ENCODE measurements at regions of chr11 and their contacts with region 1.

Region 1: DNA sequence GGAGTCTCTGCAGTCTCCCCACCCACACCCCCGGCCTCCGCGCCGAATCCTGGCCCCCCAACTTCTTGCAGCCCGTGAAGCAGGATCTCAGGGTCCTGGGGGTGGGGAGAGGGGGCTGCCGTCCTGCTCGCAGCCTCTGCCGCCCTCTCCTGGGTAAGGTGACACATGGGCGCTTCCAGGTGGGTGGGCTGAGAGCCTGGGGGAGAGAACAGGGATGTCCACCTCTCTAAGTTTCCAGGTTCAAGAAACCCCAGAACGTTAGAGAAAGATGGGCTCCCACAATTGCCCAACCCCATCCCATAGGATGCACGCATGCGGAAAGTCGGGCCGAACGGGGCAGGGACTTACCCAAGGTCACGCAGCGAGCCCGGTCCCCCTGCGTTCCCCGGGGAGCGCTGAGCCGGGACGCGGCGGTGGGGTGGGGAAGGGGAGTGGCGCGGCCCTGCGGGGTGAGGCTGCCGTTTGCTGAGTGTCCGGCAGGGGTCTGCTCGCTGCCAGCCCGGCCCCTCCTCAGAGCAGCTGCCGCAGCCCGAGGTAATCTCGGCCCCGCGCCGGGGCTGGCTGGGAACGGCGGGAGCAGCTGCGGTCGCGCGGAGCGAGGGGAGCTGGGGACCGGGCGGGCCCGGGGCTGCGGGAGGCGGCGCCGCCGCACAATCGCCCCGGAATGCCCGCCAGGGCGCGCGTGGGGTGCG is 705 bp upstream of the CAPN1 start:
- DNase-seq: peak; percentile 55 to 69
- ATAC-seq: peak; percentile 36 to 70 (median 61)
- H3K4me3 ChIP-seq: peak overlapping the region; percentile 72 to 99 (median 88)
- H3K27ac ChIP-seq: peak overlapping the region; percentile 91 to 99 (median 95)
- H3K4me1 ChIP-seq: peaks cover 6 to 28% (median 21%) of the 10 kb centered on the region in 9 donors
- H3K27me3 ChIP-seq: no peaks in the 10 kb centered on the region
- CTCF ChIP-seq: peak in 7 of 9 donors; percentile 2 to 57 (median 51)

Region 2: DNA sequence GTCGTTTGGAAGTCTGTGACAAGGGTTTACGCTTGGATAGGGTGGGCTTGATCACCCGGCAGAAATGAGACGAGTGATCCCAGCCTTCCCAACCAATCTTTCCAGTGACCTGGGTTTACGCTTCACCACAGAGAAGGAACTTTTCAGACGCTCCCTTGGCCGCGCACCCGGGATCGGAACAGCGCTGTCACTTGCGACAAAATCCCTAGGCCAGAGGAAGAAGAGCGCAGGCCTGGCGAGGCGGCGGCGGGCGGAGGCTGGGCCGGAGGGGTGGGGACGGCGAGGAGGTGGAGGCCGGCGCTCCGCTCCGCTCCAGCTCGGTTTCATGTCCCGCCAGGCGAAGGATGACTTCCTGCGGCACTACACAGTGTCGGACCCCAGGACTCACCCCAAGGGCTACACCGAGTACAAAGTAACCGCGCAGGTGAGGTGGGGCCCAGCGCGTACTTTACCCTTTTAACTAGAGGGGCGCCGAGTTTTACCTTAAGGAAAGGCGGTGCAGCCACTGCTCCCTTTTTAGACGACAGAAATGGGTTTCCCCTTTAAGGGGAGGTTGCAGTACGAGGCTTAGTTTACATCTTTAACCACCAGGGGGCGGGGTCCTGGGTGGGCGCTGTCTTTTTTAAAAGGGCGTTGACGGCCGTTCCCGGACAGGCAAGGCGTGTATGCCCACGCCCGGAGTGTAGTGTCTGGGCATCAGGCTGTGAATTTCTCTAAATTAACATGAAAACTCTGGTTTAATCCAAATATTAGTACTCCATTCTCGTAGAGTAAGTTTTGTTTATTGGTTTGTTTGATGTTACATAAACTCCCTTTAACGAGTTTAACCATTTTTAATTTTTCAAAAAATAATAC is 153.6 kb before region 1 on chr11 and contains the start of gene SNX15:
- intact Hi-C with region 1: loop called in 1 of 10 experiments (anchors 10 kb)
- DNase-seq: peak; percentile 93 to 96
- ATAC-seq: peak; percentile 98 to 99 (median 99)
- H3K4me3 ChIP-seq: peak within 1 kb of the TSS; percentile 2 to 68 (median 64)
- H3K27ac ChIP-seq: peak within 1 kb of the TSS; percentile 82 to 92 (median 88)
- H3K4me1 ChIP-seq: peaks cover 0 to 22% (median 17%) of the 10 kb centered on the region in 9 donors
- H3K27me3 ChIP-seq: no peaks in the 10 kb centered on the region
- CTCF ChIP-seq: peak; percentile 75 to 92 (median 88)
- total RNA-seq, gene SNX15: 11.4 to 21.8 (median 15.2) TPM

Region 3: DNA sequence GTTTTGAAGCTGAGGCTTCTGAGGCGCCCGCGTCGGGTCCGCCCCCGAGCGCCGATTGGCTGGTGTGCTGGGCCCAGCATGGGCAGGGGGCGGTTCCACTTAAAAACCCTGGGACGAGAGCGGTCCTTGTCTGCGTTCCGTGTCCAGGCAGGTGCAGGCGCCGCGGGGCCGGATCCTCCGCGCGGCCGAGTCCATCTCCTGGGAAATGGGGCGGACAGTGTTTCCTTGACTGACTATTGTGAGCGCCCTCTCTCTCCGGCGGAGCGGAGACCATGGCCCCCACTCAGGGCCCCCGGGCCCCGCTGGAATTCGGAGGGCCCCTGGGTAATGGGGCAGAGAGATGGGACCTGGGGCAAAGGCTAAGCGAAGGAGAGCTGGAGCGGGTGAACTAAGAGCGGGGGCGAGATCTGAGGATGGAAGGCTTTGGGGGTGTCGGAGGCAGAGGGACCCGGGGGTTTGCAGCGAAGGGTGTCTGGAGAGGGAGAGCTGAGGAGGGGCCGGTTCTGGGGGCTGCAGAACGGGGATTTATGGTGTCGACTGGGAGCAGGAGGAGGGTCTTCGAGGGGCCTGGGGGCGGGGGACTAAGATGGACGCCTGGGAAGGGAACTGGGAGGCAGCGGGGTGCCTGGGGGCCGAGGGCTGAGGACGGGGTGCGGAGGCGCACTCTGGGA is 69.1 kb before region 1 on chr11 and contains the start of gene TM7SF2:
- intact Hi-C with region 1: loop called in 3 of 10 experiments (anchors 2 to 5 kb)
- DNase-seq: peak; percentile 96
- ATAC-seq: peak; percentile 82 to 94 (median 92)
- H3K4me3 ChIP-seq: peak within 1 kb of the TSS; percentile 38 to 75 (median 59)
- H3K27ac ChIP-seq: peak within 1 kb of the TSS; percentile 27 to 84 (median 74)
- H3K4me1 ChIP-seq: peaks cover 26 to 65% (median 49%) of the 10 kb centered on the region in 9 donors
- H3K27me3 ChIP-seq: peaks cover 0 to 10% (median 0%) of the 10 kb centered on the region in 7 donors
- CTCF ChIP-seq: no peak
- total RNA-seq, gene TM7SF2: 38.1 to 87.8 (median 69.5) TPM

Region 4: GRCh38 chr11:65134386-65135253 is 46.4 kb before region 1 on chr11 and contains the start of gene SYVN1:
- intact Hi-C with region 1: loop called in 3 of 10 experiments (anchors 1 to 5 kb)
- DNase-seq: peak; percentile 91 to 93
- ATAC-seq: peak; percentile 90 to 96 (median 94)
- H3K4me3 ChIP-seq: peak within 1 kb of the TSS; percentile 75 to 98 (median 88)
- H3K27ac ChIP-seq: peak within 1 kb of the TSS; percentile 95 to 100 (median 98)
- H3K4me1 ChIP-seq: peaks cover 12 to 36% (median 27%) of the 10 kb centered on the region in 9 donors
- H3K27me3 ChIP-seq: no peaks in the 10 kb centered on the region
- CTCF ChIP-seq: no peak
- total RNA-seq, gene SYVN1: 24.1 to 34.0 (median 27.8) TPM

Region 5: DNA sequence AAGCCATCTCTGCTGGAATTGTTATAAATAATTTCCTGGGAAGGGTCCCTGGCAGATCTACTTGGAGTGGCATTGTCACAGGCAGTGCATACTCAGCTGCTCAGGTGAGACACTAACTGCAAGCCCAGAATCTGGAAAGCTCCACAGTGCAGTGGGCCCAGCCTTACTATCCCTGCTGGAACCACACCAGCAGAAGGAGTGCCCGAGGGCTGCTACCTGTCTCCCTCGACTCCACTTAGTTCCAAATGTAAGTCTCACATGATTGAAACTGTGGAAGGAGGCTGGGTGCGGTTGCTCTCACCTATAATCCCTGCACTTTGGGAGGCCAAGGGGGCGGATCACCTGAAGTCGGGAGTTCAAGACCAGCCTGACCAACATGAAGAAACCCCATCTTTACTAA is 32.4 kb before region 1 on chr11:
- intact Hi-C with region 1: loop called in 1 of 10 experiments (anchors 5 kb)
- DNase-seq: no peak
- ATAC-seq: no peak
- H3K4me3 ChIP-seq: no peak overlapping the region
- H3K27ac ChIP-seq: no peak overlapping the region
- H3K4me1 ChIP-seq: peaks cover 0 to 32% (median 11%) of the 10 kb centered on the region in 9 donors
- H3K27me3 ChIP-seq: no peaks in the 10 kb centered on the region
- CTCF ChIP-seq: no peak

Region 6: GRCh38 chr11:65743928-65744698 is 563.1 kb after region 1 on chr11:
- intact Hi-C with region 1: no loop called
- DNase-seq: peak in 1 of 2 donors; percentile 29
- ATAC-seq: peak in 7 of 8 donors; percentile 47 to 73 (median 52)
- H3K4me3 ChIP-seq: no peak overlapping the region
- H3K27ac ChIP-seq: no peak overlapping the region
- H3K4me1 ChIP-seq: no peaks in the 10 kb centered on the region
- H3K27me3 ChIP-seq: peaks cover 0 to 15% (median 0%) of the 10 kb centered on the region in 7 donors
- CTCF ChIP-seq: peak in 7 of 9 donors; percentile 16 to 42 (median 35)

Measured in heart right ventricle (tissue), 16 donors.